SK-N-SH (cell line): ENCODE measurements at regions of chr15 and their contacts with region 1.

Region 1: DNA sequence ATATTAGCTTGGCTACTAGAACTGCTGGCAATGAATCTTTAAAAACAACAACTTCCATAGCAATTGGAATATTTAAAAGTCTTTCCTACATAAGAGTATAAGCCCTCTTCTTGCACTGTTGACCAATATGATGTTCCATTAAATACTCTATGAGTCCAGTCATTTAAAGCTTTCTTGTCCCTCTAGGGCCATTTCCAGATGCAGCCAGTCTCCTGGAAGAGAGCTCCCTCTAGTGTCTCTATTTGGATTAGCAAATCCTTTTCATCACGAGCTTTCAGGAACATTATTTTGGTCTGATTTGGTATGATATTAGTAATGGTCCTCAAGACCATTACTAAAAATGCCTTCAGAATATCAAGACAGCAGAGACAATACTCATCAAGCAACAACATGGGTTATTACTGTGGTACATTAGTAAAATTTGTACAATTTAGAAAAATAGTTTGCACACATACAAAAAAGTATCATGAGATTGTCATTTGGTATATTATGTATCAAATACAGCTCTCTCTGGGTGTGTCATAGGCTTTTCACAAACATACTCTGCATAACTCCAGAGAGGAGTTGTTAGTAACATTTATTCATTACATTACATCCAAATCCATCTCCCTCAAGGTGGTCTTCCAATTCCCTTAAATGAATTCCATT is 101.3 kb downstream of the DPH6 start:
- DNase-seq: peak; percentile 56
- H3K4me3 ChIP-seq: no peak overlapping the region; a peak in 1 of 4 replicates
- H3K27ac ChIP-seq: peak overlapping the region in 1 of 2 experiments; percentile 34; a peak in 2 of 4 replicates
- H3K4me1 ChIP-seq: no peaks in the 10 kb centered on the region; a peak in 2 of 4 replicates
- H3K27me3 ChIP-seq: no peaks in the 10 kb centered on the region
- CTCF ChIP-seq: peak; percentile 89
- EP300 ChIP-seq: no peak; a peak in 1 of 4 replicates
- RAD21 ChIP-seq: peak; percentile 93

Region 2: GRCh38 chr15:35078221-35078915 is 366.3 kb before region 1 on chr15:
- CTCF ChIA-PET with region 1: interaction called, 92 read pairs
- POLR2A ChIA-PET with region 1: no interaction called
- DNase-seq: peak; percentile 75
- H3K4me3 ChIP-seq: no peak overlapping the region; a peak in 1 of 4 replicates
- H3K27ac ChIP-seq: no peak overlapping the region
- H3K4me1 ChIP-seq: no peaks in the 10 kb centered on the region
- H3K27me3 ChIP-seq: no peaks in the 10 kb centered on the region
- CTCF ChIP-seq: peak; percentile 96
- EP300 ChIP-seq: no peak
- RAD21 ChIP-seq: peak; percentile 98

Region 3: DNA sequence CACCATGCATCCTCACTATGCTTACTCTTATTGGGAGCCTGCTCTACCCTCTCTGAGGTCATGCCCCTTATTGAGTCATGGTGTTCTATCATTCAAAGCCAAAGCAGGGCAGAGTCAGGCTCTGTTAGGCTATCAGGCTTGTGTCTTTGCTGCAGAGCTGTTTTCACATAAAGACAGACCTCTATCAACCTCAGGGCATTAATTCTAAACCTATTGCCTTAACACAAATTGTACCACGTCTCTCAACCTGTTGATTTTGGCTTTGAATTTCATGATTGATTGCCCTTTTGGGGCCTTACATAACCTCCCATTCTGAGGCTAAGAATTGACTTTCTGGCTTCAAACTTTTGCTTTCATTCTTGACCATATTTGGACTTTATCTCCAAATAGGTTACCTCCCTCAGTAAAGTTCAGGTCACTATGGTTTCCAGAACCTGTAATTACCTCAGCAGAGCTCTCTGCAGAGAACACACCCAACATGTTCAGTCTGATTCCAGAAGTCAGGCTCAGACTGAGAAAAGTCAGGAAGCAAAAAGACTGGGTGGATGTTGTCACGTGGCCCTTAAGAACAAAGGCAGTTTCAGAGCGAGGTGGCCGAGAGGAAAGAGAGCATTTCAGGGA is 138.2 kb before region 1 on chr15:
- CTCF ChIA-PET with region 1: interaction called, 16 read pairs
- POLR2A ChIA-PET with region 1: no interaction called
- DNase-seq: no peak
- H3K4me3 ChIP-seq: peak overlapping the region in 1 of 2 experiments; percentile 8; a peak in 1 of 4 replicates
- H3K27ac ChIP-seq: peak overlapping the region; percentile 92 to 96
- H3K4me1 ChIP-seq: peaks cover 26 to 56% of the 10 kb centered on the region in 2 experiments
- H3K27me3 ChIP-seq: no peaks in the 10 kb centered on the region
- CTCF ChIP-seq: no peak
- EP300 ChIP-seq: no peak
- RAD21 ChIP-seq: no peak

Region 4: DNA sequence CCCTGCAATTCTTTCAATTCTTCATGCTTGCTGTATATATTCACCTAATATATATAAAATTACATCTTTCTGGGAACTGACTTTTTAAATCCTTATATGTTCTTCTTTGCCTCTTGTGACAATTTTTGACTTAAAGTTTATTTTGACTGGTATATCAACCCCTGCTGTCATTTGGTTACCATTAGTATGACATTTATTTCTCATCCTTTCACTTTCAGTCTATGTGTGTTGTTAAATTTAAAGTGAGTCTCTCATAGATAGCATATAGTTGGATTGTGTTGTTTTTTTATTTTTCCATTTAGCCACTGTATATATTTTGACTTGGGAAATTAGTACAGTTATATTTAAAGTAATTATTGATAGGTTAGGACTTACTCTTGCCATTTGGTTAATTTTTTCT is 93.6 kb before region 1 on chr15:
- CTCF ChIA-PET with region 1: no interaction called
- POLR2A ChIA-PET with region 1: no interaction called
- DNase-seq: no peak
- H3K4me3 ChIP-seq: no peak overlapping the region
- H3K27ac ChIP-seq: no peak overlapping the region
- H3K4me1 ChIP-seq: no peaks in the 10 kb centered on the region
- H3K27me3 ChIP-seq: no peaks in the 10 kb centered on the region
- CTCF ChIP-seq: no peak
- EP300 ChIP-seq: no peak
- RAD21 ChIP-seq: no peak

Region 5: GRCh38 chr15:35427091-35427490 is 17.6 kb before region 1 on chr15:
- CTCF ChIA-PET with region 1: interaction called, 102 read pairs
- POLR2A ChIA-PET with region 1: no interaction called
- DNase-seq: no peak
- H3K4me3 ChIP-seq: no peak overlapping the region
- H3K27ac ChIP-seq: peak overlapping the region; percentile 49 to 82
- H3K4me1 ChIP-seq: peaks cover 0 to 7% of the 10 kb centered on the region in 2 experiments; a peak in 1 of 4 replicates
- H3K27me3 ChIP-seq: no peaks in the 10 kb centered on the region
- CTCF ChIP-seq: no peak
- EP300 ChIP-seq: no peak
- RAD21 ChIP-seq: no peak

Region 6: DNA sequence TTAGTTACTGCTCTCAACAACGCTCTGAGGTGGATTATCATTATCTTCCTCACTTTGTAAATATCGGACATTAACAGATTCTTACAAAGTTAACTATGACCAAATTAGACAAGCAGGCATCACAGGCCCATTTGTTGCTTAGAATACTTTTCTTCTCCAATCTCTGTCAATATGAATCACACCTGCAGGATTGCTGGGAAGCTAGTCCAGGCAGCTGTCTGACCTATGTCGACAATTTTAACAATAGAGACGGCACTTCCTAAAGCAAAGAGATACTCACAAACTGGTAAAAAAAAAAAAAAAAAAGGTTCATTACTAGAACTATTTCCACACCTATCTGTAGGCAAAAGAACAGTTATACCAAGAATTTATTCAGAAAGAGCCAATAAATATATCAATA is 15.9 kb after region 1 on chr15:
- CTCF ChIA-PET with region 1: interaction called, 22 read pairs
- POLR2A ChIA-PET with region 1: no interaction called
- DNase-seq: no peak
- H3K4me3 ChIP-seq: no peak overlapping the region
- H3K27ac ChIP-seq: no peak overlapping the region
- H3K4me1 ChIP-seq: 0 out of 4 replicates have a peak, but pooled peaks cover 0 to 5% of the 10 kb centered on the region in 2 experiments
- H3K27me3 ChIP-seq: no peaks in the 10 kb centered on the region
- CTCF ChIP-seq: no peak
- EP300 ChIP-seq: no peak
- RAD21 ChIP-seq: no peak

Region 7: GRCh38 chr15:35479423-35479822 is 34.7 kb after region 1 on chr15:
- CTCF ChIA-PET with region 1: interaction called, 14 read pairs
- POLR2A ChIA-PET with region 1: no interaction called
- DNase-seq: no peak
- H3K4me3 ChIP-seq: no peak overlapping the region
- H3K27ac ChIP-seq: peak overlapping the region in 1 of 2 experiments; percentile 22; a peak in 1 of 4 replicates
- H3K4me1 ChIP-seq: peaks cover 6 to 11% of the 10 kb centered on the region in 2 experiments; a peak in 3 of 4 replicates
- H3K27me3 ChIP-seq: no peaks in the 10 kb centered on the region
- CTCF ChIP-seq: no peak
- EP300 ChIP-seq: no peak
- RAD21 ChIP-seq: no peak